ENCODE measurements at regions of chr7 and their contacts with region 1.

Region 1: DNA sequence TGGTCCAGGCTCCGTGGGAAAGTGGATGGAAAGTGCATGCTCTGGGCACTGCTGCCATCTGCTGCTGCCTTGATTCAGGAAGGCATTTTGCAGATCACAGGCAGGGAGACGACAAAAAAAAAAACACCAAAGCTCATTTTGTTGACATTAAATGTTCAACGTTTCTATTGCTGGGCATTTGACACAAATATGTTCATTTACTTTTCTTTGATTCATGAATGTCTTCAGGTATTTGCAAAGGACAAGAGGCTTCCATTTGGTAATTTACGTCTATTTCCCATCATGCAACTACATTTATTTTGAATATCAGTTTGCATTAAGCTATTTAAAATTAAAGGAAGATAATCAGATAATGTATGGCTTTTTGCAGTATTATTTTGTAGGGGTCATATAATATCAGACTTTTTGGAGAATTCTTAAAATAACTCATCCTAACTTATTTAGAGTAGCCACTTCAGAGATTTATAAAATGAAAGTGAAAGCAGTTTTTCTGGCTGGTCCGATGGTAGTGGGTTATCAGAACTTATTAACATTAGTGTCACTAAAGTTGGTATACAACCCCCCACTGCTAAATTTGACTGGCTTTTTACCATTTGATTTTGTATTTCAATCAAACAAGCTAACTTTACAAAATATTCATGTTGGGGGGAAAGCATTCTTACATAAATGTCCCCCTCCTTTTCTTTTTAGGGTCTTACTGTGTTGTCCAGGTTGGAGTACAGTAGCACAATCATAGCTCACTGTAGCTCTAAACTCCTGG is 65.3 kb downstream of the PDIA4 start:
- DNase-seq: peak; percentile 62 to 92 (median 81)

Region 2: DNA sequence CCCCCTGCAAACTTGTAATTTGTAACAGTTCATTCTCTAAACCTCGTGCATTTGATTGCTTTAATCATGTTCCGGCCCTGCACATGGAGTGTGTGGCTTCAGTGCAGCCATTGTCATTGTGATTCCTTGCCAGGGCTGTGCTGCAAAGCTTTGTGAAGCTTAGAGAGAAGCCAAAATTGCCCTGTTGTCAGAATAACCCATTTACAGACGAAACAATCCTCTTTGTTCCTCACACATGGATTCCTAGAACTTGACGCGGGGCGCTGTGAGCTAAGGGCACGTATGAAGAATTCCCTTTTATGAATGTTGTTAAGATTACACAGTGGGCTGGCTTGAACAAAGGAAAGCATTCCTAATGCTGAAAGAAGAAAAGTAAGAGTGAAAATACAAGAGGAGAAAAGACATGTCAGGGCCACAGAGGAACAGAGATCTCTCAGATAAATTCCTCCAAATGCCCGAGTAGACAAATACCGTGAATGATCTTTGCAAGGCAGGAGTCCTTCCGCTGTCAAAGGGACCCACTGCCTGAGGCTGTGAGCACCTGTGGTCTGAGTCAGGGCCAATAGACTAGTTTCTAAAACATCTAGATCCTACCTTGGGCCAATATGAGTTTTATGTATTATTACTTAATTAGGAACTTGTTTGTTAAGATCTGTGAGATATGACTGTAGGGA is 577.9 kb before region 1 on chr7:
- intact Hi-C with region 1: no loop called
- DNase-seq: peak in 41 of 42 donors; percentile 4 to 88 (median 66)

Region 3: GRCh38 chr7:148503875-148504487 is 459.0 kb before region 1 on chr7:
- intact Hi-C with region 1: loop called (anchors 5 kb)
- DNase-seq: peak in 2 of 42 donors; percentile 25 to 35

Region 4: DNA sequence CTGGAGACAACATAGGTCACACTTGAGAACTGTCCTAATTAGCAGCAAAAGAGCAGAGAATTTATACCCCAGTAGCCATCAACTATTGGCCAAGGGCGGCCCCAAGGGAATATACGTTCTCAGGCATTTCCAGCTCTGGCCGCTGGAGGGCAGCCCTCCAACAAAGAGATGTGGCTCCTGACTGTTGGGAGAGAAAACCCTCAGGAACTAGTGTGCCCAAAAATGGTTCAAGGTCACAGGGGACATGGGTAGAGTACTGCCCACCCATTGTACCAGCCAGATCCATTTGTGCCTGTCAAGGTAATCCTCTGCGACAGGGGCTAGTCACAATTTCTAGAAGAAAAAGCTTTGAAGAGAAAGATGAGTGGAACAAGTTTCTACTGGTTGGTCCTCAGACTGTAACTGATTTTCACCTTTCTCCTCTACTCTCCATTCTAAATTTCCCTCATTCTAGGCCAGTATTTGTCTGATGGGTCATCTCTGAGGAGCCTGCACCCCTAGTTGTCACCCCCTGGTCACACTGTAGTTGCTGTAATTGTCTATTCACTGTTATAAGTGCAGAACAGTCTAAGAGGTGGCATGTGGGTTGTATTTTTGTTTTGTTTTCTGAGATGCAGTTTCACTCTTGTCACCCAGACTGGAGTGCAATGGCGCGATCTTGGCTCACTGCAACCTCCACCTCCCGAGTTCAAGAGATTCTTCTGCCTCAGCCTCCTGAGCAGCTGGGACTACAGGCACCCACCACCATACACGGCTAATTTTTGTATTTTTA is 387.2 kb before region 1 on chr7:
- intact Hi-C with region 1: loop called (anchors 5 kb)
- DNase-seq: peak; percentile 36 to 90 (median 76)

Region 5: DNA sequence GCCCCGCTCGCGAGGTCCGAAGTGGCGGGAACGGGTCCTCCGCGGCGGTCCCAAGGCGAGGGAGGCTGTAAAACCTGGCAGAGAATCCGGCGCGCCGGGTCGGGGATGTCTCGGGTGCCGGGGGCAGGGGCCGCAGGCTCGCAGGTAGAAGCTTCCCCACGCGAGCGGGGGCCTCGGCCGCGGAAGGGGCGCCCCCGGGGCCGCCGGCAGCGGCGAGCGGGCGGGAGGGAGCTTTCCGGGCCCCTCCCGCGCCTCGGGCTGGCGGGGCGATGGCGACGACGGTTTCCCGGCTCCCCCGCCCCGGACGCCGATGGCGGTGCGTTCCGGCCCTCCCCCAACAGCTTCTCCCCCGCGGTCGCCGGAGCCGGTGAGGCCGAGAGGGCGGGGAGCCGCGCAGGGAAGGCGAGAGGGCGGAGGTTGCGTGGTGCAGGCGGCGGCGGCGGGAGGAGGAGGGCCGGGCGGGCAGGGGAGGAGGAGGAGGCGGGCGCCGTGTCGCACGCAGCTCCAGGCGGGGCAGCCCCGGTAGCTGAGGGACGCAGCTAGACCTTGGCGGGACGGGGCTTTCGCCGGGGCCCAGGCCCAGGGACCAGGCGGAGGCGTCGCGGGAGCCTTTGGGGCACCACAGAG is 264.5 kb before region 1 on chr7 and contains the start of gene CUL1:
- intact Hi-C with region 1: loop called (anchors 10 kb)
- DNase-seq: peak; percentile 25 to 91 (median 81)

Measured in head of caudate nucleus (tissue), 42 donors.